Aorta (tissue), 5 donors: ENCODE measurements at regions of chr3 and their contacts with region 1.

Region 1: GRCh38 chr3:96863129-96863740 is 48.8 kb downstream of the EPHA6 start:
- DNase-seq: no peak
- ATAC-seq: no peak
- H3K4me3 ChIP-seq: no peak overlapping the region
- H3K27ac ChIP-seq: no peak overlapping the region
- H3K4me1 ChIP-seq: no peaks in the 10 kb centered on the region
- H3K27me3 ChIP-seq: no peaks in the 10 kb centered on the region

Region 2: DNA sequence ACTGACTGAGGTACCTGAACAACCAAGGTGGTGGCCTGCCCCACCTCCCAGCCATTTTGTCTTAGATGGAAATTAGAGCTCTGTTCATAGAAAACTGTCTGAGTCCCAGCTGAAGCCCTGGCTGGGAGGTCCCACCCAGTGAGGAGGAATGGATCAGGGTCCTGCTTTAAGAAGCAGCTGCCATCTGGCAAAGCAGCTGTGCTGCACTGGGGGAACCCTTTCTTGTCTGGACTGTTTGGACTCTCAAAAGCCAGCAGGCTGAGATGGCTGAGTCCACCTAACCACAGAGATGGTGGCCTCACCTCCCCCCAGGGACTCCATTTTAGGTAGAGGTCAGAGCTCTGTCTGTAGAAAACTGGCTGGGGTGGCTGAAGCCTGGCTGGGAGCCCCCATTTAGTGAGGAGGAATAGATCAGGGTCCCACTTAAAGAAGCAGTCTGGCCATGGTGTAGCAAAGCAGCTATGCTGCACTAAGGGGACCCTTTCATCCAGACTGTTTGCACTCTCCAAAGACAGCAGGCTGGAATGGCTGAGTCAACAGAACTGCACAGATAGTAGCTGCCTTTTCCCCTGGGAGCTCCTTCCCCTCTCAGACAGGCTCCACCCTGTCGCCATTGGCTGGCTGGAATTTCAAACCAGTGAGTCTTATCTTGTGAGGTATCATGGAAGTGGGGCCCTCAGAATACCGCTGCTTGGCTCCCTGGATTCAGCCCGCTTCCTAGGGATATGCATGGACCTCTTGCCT is 68.1 kb after region 1 on chr3:
- intact Hi-C with region 1: no loop called
- DNase-seq: no peak
- ATAC-seq: peak; percentile 29
- H3K4me3 ChIP-seq: no peak overlapping the region
- H3K27ac ChIP-seq: no peak overlapping the region
- H3K4me1 ChIP-seq: no peaks in the 10 kb centered on the region
- H3K27me3 ChIP-seq: no peaks in the 10 kb centered on the region

Region 3: DNA sequence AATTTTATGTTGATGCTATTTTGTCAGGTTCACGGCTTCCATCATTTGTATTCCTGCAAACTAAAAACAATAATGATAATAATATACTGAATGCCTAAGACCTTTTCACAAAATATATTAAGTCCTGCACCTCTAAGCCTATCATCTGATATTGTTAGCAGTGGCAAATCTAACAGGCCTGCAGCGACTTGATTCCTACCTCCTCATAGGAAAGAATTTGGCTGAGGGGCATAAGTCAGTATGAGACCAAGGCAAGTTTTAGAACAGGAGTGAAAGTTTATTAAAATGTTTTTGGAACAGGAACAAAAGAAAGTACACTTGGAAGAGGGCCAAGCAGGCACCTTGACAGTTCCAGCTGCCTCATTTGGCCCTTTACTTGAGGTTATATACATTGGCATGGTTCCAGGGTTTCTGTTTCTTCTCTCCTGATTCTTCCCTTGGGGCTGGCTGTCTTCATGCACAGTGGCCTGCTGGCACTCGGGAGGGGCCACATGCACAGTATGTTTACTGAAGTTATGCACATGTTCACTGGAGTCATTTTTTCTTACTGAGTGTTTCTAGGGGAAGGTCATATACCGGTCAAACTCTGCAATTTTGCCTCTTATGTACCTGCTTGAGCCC is 369.3 kb after region 1 on chr3:
- intact Hi-C with region 1: no loop called
- DNase-seq: no peak
- ATAC-seq: no peak
- H3K4me3 ChIP-seq: no peak overlapping the region
- H3K27ac ChIP-seq: no peak overlapping the region
- H3K4me1 ChIP-seq: no peaks in the 10 kb centered on the region
- H3K27me3 ChIP-seq: no peaks in the 10 kb centered on the region

Region 4: GRCh38 chr3:97658668-97659285 is 795.5 kb after region 1 on chr3:
- intact Hi-C with region 1: loop called (anchors 2 to 10 kb)
- DNase-seq: no peak
- ATAC-seq: no peak
- H3K4me3 ChIP-seq: no peak overlapping the region
- H3K27ac ChIP-seq: no peak overlapping the region
- H3K4me1 ChIP-seq: no peaks in the 10 kb centered on the region
- H3K27me3 ChIP-seq: no peaks in the 10 kb centered on the region

Region 5: DNA sequence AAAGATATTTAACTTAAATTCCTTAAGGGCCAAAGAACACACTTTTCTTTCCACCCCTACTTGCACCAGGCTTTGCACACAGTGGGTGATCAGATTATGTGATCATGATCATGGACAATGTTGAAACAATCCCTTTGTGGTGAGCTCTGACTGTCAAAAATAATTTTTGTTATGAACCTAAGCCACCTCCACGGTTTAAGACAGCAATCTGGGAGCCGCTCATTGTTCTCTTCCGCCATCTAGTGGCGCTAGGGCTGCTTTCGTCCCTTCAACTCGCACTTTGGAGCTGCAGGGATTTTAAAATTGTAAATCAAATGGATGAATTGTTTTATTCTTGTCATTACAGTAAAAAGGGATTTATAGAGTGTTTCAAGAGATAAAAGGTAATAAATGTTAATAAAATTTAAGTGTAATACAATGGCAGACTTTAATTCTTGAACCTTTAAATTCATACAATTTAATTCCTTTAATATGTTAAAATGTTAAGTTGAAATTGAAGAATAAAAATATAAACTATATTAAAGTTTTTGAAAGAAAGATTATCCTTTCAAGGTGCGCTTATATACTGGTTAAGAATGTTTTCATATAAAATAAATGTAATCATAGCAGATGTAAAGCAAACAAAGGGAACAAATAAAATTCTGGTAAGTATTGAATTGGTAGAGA is 856.1 kb after region 1 on chr3:
- intact Hi-C with region 1: loop called (anchors 5 to 10 kb)
- DNase-seq: peak; percentile 67 to 83
- ATAC-seq: no peak
- H3K4me3 ChIP-seq: no peak overlapping the region
- H3K27ac ChIP-seq: no peak overlapping the region
- H3K4me1 ChIP-seq: no peaks in the 10 kb centered on the region
- H3K27me3 ChIP-seq: no peaks in the 10 kb centered on the region

Region 6: GRCh38 chr3:97967966-97968365 is 1104.7 kb after region 1 on chr3:
- intact Hi-C with region 1: no loop called
- DNase-seq: no peak
- ATAC-seq: no peak
- H3K4me3 ChIP-seq: no peak overlapping the region
- H3K27ac ChIP-seq: no peak overlapping the region
- H3K4me1 ChIP-seq: no peaks in the 10 kb centered on the region
- H3K27me3 ChIP-seq: no peaks in the 10 kb centered on the region